H1 (cell line): ENCODE measurements at regions of chr12 and their contacts with region 1.

Region 1: DNA sequence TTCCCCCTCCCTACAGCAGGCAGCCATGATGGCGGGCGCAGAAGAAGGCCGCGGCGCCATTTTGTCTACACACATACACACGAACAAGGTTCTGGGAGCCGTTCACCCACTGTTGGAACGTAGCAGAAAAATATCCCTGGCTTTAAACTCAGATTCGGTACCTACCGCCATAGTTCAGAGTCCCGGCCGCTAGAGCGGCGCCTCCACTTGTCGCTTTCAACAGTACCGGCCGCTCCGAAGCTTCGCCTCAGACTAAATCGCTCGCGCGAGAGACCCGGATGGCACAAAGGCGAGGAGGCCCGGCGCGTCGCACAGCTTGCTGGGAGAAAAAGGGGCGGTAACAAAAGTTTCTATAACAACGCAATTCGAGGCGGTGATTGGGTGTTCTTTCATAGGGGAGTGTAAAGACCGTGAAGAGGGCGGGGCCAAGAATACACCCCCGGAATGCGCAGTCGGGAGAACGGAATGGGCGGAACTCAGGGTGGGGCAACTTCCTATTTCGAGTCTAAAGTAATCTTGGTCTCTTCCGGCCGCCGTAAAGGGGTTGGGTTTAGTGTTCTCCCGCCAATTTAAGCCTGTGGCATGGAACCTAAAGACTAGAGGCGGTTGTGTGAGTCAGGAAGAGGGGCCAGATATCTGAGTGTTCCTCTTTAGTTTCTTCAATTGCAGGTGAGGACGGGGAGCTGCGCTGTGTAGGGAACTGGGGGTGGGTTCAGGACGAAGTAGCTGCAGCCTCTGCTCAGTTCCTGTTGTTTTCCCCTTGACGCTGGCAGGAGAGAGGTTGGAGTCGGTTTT is at the starts of genes KNTC1 and RSRC2:
- DNase-seq: peak; percentile 93 to 98
- H3K4me3 ChIP-seq: peak within 1 kb of the TSS; percentile 96 to 99 (median 98)
- H3K27ac ChIP-seq: peak within 1 kb of the TSS; percentile 100
- H3K4me1 ChIP-seq: no peaks in the 10 kb centered on the region; a peak in 4 of 7 replicates
- H3K27me3 ChIP-seq: no peaks in the 10 kb centered on the region
- CTCF ChIP-seq: no peak; a peak in 1 of 4 replicates
- EP300 ChIP-seq: no peak; a peak in 1 of 3 replicates
- POLR2A ChIP-seq: peak; percentile 99
- RAD21 ChIP-seq: no peak
- total RNA-seq, gene KNTC1: 66.6 and 80.2 TPM in 2 replicates
- total RNA-seq, gene RSRC2: 71.4 and 72.8 TPM in 2 replicates

Region 2: DNA sequence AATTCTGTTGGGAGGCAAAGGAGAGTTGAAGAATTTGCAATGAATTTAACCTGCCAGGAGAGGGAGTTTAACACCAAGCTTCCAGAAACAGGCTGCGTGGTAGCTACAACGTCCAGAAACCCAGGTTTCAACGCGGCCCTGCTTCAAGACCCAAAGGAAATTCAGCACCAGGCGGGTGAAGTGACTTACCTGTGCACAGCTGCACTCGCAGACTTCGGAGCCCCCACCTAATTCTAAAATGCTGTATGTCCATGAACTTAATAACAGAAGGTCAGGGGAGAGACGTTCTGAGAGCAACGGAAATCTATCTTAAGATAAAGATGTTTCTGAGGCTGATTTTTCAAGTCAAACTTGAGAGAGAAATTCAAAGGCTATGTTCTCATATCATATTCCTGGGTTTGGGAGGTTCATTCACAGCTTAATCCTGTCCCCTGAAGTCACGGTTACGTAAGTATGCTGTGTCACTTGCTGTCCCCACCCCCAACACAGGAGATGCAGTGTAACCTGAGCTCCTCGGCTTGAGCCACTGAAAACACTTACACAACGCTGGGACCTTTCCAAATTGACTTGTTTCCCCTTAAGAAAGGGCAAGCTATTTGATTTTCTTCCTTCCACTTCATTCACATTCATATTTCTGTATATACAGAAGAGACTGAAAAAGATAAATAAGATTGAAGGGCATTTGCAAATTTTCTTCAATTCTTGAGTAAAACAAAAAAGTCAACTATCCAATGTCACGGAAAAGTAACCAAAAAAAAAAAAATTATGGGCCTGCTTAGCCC is 127.1 kb before region 1 on chr12:
- CTCF ChIA-PET with region 1: no interaction called
- POLR2A ChIA-PET with region 1: interaction called, 12 read pairs
- DNase-seq: peak in 1 of 2 experiments; percentile 60
- H3K4me3 ChIP-seq: peak overlapping the region in 3 of 4 experiments; percentile 32 to 51 (median 44); a peak in 5 of 8 replicates
- H3K27ac ChIP-seq: peak overlapping the region; percentile 74
- H3K4me1 ChIP-seq: peaks cover 3 to 8% (median 5%) of the 10 kb centered on the region in 4 experiments; a peak in 6 of 7 replicates
- H3K27me3 ChIP-seq: no peaks in the 10 kb centered on the region
- CTCF ChIP-seq: peak in 2 of 3 experiments; percentile 72 to 77; a peak in 3 of 4 replicates
- EP300 ChIP-seq: no peak
- POLR2A ChIP-seq: peak in 1 of 2 experiments; percentile 39; a peak in 1 of 3 replicates
- RAD21 ChIP-seq: peak; percentile 90 to 92

Region 3: GRCh38 chr12:122500685-122501488 is 26.0 kb before region 1 on chr12 and contains the start of gene ZCCHC8:
- CTCF ChIA-PET with region 1: interaction called, 3 read pairs
- POLR2A ChIA-PET with region 1: interaction called, 1,221 read pairs
- DNase-seq: peak; percentile 94 to 95
- H3K4me3 ChIP-seq: peak within 1 kb of the TSS; percentile 77 to 96 (median 94)
- H3K27ac ChIP-seq: peak within 1 kb of the TSS; percentile 90
- H3K4me1 ChIP-seq: peaks cover 0 to 3% (median 0%) of the 10 kb centered on the region in 4 experiments; a peak in 1 of 7 replicates
- H3K27me3 ChIP-seq: no peaks in the 10 kb centered on the region
- CTCF ChIP-seq: peak; percentile 5 to 24 (median 19); a peak in 2 of 4 replicates
- EP300 ChIP-seq: peak in 1 of 2 experiments; percentile 4; a peak in 1 of 3 replicates
- POLR2A ChIP-seq: peak; percentile 81 to 85
- RAD21 ChIP-seq: no peak
- total RNA-seq, gene ZCCHC8: 27.4 and 28.9 TPM in 2 replicates

Region 4: GRCh38 chr12:122558745-122559641 is 32.1 kb after region 1 on chr12:
- CTCF ChIA-PET with region 1: no interaction called
- POLR2A ChIA-PET with region 1: interaction called, 23 read pairs
- DNase-seq: no peak
- H3K4me3 ChIP-seq: no peak overlapping the region
- H3K27ac ChIP-seq: no peak overlapping the region
- H3K4me1 ChIP-seq: no peaks in the 10 kb centered on the region
- H3K27me3 ChIP-seq: no peaks in the 10 kb centered on the region
- CTCF ChIP-seq: no peak
- EP300 ChIP-seq: no peak
- POLR2A ChIP-seq: no peak
- RAD21 ChIP-seq: no peak

Region 5: DNA sequence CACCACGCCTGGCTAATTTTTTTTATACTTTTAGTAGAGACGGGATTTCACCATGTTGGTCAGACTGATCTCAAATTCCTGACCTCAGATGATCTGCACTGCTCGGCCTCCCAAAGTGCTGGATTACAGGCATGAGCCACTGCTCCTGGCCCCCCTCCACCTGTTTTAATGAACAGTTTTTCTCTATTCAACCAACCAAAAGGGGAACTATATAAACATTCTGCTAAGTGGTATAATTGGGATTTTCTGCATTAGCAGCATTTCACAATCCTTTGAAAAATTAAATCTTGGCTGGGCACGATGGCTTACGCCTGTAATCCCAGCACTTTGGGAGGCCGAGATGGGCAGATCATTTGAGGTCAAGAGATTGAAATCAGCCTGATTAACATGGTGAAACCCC is 44.9 kb after region 1 on chr12:
- CTCF ChIA-PET with region 1: no interaction called
- POLR2A ChIA-PET with region 1: interaction called, 10 read pairs
- DNase-seq: no peak
- H3K4me3 ChIP-seq: no peak overlapping the region
- H3K27ac ChIP-seq: no peak overlapping the region
- H3K4me1 ChIP-seq: no peaks in the 10 kb centered on the region
- H3K27me3 ChIP-seq: no peaks in the 10 kb centered on the region
- CTCF ChIP-seq: no peak
- EP300 ChIP-seq: no peak
- POLR2A ChIP-seq: no peak
- RAD21 ChIP-seq: no peak

Region 6: DNA sequence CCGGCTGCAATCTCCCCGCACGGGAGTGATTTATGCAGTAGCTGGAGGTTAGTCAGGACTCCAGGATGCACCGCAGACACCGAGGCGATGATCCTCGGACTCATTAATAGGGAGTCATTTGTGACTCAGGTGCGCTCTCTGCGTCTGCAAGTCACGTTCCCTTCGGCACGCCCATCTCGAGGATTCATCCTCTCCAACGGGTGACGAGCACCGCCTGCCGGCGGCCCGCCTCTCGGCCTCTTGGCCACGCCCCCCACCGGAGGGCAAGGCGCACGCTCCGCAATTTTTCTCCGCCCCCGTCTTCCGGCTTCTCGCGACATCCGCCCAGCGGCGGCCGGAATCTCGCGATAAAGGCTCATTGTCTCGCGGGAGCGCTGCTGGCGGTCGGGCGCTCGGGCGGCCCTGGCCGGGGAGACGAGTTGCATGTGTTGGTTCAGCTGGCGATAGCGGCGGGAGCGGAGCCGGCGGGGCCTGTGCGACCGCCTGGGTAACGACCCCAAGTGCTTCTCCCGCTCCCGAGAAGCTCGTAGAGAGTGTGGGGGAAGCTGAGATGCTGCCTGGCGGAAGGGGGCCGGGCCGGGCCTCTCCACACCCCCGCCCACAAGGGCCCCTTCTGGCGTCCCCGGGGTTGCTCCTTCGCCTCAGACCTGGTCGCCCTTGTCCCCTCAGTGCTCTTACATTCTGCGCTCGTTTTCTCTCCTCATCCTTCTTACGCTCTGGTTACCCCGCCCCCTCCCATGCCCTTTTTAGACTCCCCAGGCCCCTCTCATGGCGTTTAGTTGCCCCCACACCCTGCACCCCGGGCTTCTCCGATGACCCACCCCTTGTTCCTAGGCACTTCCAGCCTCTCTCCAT is 225.8 kb after region 1 on chr12 and contains the start of gene DENR:
- CTCF ChIA-PET with region 1: no interaction called
- POLR2A ChIA-PET with region 1: interaction called, 10 read pairs
- DNase-seq: peak; percentile 96 to 100
- H3K4me3 ChIP-seq: peak within 1 kb of the TSS; percentile 79 to 98 (median 88)
- H3K27ac ChIP-seq: peak within 1 kb of the TSS; percentile 83
- H3K4me1 ChIP-seq: peaks cover 2 to 9% (median 6%) of the 10 kb centered on the region in 4 experiments; a peak in 5 of 7 replicates
- H3K27me3 ChIP-seq: no peaks in the 10 kb centered on the region
- CTCF ChIP-seq: peak; percentile 87 to 95 (median 95)
- EP300 ChIP-seq: 0 out of 3 replicates have a peak, but pooled peaks of 1 of the 2 experiments have one; percentile 6
- POLR2A ChIP-seq: peak; percentile 79 to 96
- RAD21 ChIP-seq: peak; percentile 93 to 96
- total RNA-seq, gene DENR: 78.1 and 84.0 TPM in 2 replicates